ENCODE measurements at regions of chr11 and their contacts with region 1.

Region 1: DNA sequence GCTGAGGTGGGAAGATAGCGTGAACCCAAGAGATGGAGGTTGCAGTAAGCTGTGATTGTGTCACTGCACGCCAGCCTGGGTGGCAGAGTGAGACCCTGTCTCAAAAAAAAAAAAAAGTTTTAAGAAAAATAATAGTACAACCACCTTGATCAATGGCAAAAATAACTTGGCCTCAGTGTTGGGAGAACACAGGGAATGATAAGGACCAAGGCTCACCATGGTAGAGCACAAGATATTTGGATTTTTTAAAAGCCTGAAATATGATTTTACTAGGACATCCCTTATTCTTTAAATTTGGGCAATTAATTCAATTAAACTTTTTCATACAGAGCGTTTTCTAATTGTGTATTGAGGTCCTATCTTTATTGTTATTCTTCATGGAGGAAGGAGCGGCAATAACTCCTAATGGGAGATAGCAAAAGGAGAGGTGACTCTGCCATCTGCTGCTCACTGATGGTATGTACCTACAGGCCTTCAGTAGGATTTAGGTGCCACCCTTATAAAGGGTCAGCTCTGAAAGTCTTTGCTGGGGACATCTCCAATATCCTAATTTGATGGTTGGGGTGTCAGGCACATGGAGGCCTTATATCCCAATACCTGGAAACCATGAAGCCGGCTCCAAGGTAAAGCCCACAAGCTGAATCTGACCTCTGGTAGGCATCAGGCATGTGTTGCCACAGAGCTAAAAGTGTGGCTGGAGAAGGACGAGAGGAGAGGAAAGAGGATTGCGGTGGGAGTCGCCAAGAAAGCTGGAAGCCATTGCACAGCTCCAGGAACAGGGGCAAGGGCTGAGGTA is 21.9 kb upstream of the POLD3 start:
- DNase-seq: peak; percentile 57
- CTCF ChIP-seq: peak; percentile 67

Region 2: DNA sequence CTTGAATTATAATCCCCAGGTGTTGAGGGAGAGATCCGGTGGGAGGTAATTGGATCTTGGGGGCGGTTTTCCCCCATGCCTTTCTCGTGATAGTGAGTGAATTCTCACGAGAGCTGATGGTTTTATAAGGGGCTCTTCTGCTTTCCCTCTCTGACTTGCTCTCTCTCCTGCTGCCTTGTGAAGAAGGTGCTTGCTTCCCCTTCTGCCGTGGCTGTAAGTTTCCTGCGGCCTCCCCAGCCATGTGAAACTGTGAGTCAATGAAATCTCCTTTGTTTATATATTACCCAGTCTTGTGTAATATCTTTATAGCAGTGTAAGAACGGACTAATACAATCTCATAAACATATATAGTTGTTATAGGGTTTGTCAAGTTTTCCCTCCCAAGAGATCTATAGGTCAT is 135.9 kb before region 1 on chr11:
- CTCF ChIA-PET with region 1: no interaction called
- POLR2A ChIA-PET with region 1: no interaction called
- DNase-seq: no peak
- CTCF ChIP-seq: no peak

Region 3: DNA sequence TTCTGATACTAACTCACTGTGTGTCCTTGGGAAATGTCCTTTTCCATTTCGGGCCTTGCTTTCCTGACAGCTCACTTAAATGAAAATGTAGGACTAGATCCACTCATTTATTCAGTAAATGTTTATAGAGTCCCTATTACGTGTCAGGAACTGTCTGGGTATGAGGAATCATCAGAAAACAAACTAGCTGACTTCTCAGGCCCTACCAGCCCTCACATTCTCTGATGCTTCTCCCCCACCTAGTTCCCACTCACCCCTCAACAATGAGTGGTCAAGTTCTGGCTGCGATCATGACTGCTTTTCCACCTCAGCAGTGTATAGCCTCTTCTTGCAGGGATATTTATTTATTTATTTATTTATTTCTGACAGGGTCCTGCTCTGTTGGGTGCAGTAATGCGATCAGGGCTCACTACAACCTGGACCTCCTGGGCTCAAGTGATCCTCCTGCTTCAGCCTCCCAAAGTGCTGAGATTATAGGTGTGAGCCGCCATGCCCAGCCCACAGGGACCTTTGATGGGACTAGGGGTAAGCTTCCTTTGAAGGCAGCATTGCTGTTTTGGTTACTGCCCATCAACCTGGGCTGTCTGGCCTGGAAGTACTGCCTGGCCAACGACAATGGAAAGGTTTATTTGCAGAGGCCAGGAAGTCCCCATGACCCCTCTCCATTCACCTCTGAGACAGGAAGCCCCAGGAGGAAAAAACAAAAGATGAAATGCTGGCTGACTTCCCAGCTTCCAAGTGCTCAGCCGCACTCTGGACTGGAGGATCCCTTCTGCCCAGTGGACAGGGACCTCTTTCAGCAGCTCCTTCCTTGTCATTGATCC is 11.1 kb before region 1 on chr11:
- CTCF ChIA-PET with region 1: interaction called, 16 read pairs
- POLR2A ChIA-PET with region 1: no interaction called
- DNase-seq: no peak
- CTCF ChIP-seq: no peak

Region 4: GRCh38 chr11:74581954-74582547 is 11.6 kb after region 1 on chr11:
- CTCF ChIA-PET with region 1: interaction called, 28 read pairs
- POLR2A ChIA-PET with region 1: no interaction called
- DNase-seq: no peak
- CTCF ChIP-seq: no peak

Region 5: GRCh38 chr11:75352588-75353206 is 782.2 kb after region 1 on chr11:
- CTCF ChIA-PET with region 1: no interaction called
- POLR2A ChIA-PET with region 1: interaction called, 11 read pairs
- DNase-seq: no peak
- CTCF ChIP-seq: no peak